Heart right ventricle (tissue), 16 donors: ENCODE measurements at regions of chr4 and their contacts with region 1.

Region 1: GRCh38 chr4:130712038-130712437 is 1616.1 kb downstream of the C4orf33 start:
- DNase-seq: no peak
- ATAC-seq: no peak
- H3K4me3 ChIP-seq: no peak overlapping the region
- H3K27ac ChIP-seq: no peak overlapping the region
- H3K4me1 ChIP-seq: no peaks in the 10 kb centered on the region
- H3K27me3 ChIP-seq: no peaks in the 10 kb centered on the region
- CTCF ChIP-seq: no peak

Region 2: DNA sequence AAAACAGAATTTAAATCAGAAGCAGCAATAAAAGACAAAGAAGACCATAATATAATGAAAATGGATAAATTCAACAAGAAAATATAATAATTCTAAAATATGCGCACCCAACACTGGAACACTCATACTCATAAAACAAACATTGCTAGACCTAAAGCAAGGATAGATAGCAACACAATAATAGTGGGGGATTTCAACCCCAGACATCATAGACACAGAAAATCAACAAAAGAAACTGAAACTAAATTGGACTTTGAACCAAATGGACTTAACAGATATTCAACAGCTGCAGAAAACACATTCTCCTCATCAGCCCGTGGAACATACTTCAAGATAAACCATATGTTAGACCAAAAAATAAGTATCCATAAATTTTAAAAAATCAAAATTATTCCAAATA is 63.5 kb before region 1 on chr4:
- intact Hi-C with region 1: no loop called
- DNase-seq: no peak
- ATAC-seq: no peak
- H3K4me3 ChIP-seq: no peak overlapping the region
- H3K27ac ChIP-seq: no peak overlapping the region
- H3K4me1 ChIP-seq: no peaks in the 10 kb centered on the region
- H3K27me3 ChIP-seq: no peaks in the 10 kb centered on the region
- CTCF ChIP-seq: no peak

Region 3: GRCh38 chr4:130659314-130659713 is 52.7 kb before region 1 on chr4:
- intact Hi-C with region 1: no loop called
- DNase-seq: no peak
- ATAC-seq: no peak
- H3K4me3 ChIP-seq: no peak overlapping the region
- H3K27ac ChIP-seq: no peak overlapping the region
- H3K4me1 ChIP-seq: no peaks in the 10 kb centered on the region
- H3K27me3 ChIP-seq: no peaks in the 10 kb centered on the region
- CTCF ChIP-seq: no peak

Region 4: DNA sequence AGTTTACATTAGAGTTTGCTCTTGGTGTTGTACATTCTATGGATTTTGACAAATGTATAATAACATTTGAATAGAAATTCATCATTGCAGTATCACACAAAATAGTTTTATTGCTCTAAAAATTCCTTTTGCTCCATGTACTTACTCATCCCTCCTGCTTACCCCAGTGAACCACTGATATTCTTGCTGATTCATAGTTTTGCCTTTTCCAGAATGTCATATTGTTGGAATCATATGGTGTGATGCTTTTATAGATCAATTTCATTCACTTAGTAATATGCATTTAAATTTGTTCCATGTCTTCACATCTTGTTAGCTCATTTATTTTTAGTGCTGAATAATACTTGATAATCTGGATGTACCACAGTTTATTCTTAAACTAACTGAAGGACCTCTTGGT is 22.9 kb before region 1 on chr4:
- intact Hi-C with region 1: loop called in 1 of 10 experiments (anchors 1 kb)
- DNase-seq: no peak
- ATAC-seq: no peak
- H3K4me3 ChIP-seq: no peak overlapping the region
- H3K27ac ChIP-seq: no peak overlapping the region
- H3K4me1 ChIP-seq: no peaks in the 10 kb centered on the region
- H3K27me3 ChIP-seq: no peaks in the 10 kb centered on the region
- CTCF ChIP-seq: no peak

Region 5: DNA sequence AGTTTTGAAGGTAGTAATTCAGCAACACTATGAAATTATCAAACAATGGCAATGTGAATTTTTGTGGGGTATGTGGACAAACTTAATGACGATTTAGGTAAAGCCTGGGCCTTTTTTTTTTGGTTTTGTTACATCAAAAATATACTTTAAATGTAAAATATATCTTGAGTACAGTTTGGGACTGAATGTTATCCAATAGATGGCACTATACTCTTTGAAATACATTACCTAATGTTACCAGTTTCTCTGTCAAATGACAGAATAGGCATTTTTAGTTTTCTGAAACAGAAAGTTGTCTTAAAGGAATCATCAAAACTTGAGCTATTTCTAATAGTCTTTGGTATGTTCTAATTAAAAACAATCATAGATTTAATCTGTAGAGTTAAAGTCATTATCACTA is 35.8 kb after region 1 on chr4:
- intact Hi-C with region 1: no loop called
- DNase-seq: no peak
- ATAC-seq: no peak
- H3K4me3 ChIP-seq: no peak overlapping the region
- H3K27ac ChIP-seq: no peak overlapping the region
- H3K4me1 ChIP-seq: no peaks in the 10 kb centered on the region
- H3K27me3 ChIP-seq: no peaks in the 10 kb centered on the region
- CTCF ChIP-seq: peak in 2 of 9 donors; percentile 13 to 25

Region 6: DNA sequence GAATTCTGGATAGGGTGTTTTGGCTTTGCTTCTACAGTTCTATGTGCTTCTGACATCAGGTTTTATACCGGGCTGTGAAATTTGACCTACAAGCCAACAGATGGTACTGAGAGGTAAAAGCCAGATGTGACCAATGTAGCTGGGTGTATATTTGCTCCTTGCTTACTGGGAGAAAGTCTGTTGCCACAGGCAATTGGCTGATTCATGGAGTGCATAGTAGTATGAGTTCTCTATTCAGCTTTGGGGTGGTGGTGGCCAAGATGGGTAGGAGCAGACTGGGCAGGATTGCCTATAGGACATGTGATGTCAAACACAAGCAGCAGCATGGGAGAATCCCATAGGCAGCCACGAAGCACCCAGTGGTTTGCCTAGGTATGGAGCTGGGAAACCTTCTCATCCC is 210.9 kb after region 1 on chr4:
- intact Hi-C with region 1: no loop called
- DNase-seq: no peak
- ATAC-seq: no peak
- H3K4me3 ChIP-seq: no peak overlapping the region
- H3K27ac ChIP-seq: no peak overlapping the region
- H3K4me1 ChIP-seq: no peaks in the 10 kb centered on the region
- H3K27me3 ChIP-seq: no peaks in the 10 kb centered on the region
- CTCF ChIP-seq: no peak